ENCODE measurements at regions of chr19 and their contacts with region 1.

Region 1: GRCh38 chr19:58451358-58452101 is at the start of gene ZNF324B:
- DNase-seq: peak; percentile 97
- H3K4me3 Mint-ChIP-seq: peak within 1 kb of the TSS; percentile 79
- H3K27ac Mint-ChIP-seq: no peak within 1 kb of the TSS
- H3K4me1 Mint-ChIP-seq: peaks cover 21% of the 10 kb centered on the region
- H3K27me3 Mint-ChIP-seq: peaks cover 11% of the 10 kb centered on the region
- total RNA-seq, gene ZNF324B: 5.8 to 6.2 TPM

Region 2: GRCh38 chr19:58429745-58430144 is 21.8 kb before region 1 on chr19:
- CTCF ChIA-PET with region 1: no interaction called
- intact Hi-C with region 1: no loop called
- DNase-seq: no peak
- H3K4me3 Mint-ChIP-seq: no peak overlapping the region
- H3K27ac Mint-ChIP-seq: no peak overlapping the region
- H3K4me1 Mint-ChIP-seq: no peaks in the 10 kb centered on the region
- H3K27me3 Mint-ChIP-seq: no peaks in the 10 kb centered on the region

Region 3: DNA sequence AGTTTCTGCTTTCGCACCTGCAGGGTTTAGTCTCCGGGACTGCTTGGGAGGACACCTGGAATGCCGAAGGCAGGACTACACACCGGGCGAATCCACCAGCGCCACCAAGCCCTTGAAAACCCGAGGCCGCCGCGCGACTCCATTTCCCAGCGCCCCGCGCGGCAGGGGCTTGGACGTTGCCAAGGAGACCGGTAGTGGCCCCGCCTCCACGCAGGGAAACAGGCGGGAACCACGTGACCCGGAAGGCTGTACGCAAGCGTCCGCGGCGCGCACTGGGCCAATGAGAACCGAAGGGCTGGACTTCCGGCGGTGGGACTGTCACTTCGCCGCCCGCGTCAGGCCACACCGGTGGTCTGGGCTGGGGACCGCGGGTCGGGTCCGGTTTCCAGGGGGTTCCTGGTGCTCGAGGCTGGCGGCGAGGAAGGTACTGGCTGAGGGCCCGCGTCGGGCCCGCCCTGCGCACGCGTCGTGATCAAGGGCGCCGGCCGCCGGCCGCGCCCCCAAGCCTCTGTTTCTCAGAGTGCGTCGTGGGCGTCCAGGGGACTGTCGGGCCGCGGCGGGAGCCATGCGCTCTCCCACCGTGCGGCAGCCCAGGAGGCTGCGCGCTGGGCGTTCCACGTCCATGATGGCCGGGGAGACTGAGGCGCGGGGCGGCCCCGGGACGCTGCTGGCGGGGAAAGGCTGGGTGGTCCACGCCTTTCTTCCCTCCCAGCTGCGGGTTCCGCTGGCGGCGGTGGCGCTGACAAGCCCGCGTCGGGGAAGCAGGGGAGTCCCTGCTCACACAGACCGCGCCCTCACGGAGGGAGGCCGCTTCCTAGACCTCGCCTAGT is 15.4 kb after region 1 on chr19 and contains the start of gene ZNF324:
- CTCF ChIA-PET with region 1: interaction called, 4 read pairs
- intact Hi-C with region 1: loop called (anchors 1 kb)
- DNase-seq: peak; percentile 99
- H3K4me3 Mint-ChIP-seq: peak within 1 kb of the TSS; percentile 83
- H3K27ac Mint-ChIP-seq: no peak within 1 kb of the TSS
- H3K4me1 Mint-ChIP-seq: peaks cover 20% of the 10 kb centered on the region
- H3K27me3 Mint-ChIP-seq: peaks cover 2% of the 10 kb centered on the region
- total RNA-seq, gene ZNF324: 2.4 to 3.0 TPM

Region 4: GRCh38 chr19:58475714-58476497 is 24.4 kb after region 1 on chr19 and contains the start of gene ZNF446:
- CTCF ChIA-PET with region 1: no interaction called
- intact Hi-C with region 1: loop called (anchors 1 kb)
- DNase-seq: peak; percentile 97
- H3K4me3 Mint-ChIP-seq: peak within 1 kb of the TSS; percentile 94
- H3K27ac Mint-ChIP-seq: peak within 1 kb of the TSS; percentile 97
- H3K4me1 Mint-ChIP-seq: peaks cover 13% of the 10 kb centered on the region
- H3K27me3 Mint-ChIP-seq: no peaks in the 10 kb centered on the region
- total RNA-seq, gene ZNF446: 2.6 to 2.9 TPM

Region 5: DNA sequence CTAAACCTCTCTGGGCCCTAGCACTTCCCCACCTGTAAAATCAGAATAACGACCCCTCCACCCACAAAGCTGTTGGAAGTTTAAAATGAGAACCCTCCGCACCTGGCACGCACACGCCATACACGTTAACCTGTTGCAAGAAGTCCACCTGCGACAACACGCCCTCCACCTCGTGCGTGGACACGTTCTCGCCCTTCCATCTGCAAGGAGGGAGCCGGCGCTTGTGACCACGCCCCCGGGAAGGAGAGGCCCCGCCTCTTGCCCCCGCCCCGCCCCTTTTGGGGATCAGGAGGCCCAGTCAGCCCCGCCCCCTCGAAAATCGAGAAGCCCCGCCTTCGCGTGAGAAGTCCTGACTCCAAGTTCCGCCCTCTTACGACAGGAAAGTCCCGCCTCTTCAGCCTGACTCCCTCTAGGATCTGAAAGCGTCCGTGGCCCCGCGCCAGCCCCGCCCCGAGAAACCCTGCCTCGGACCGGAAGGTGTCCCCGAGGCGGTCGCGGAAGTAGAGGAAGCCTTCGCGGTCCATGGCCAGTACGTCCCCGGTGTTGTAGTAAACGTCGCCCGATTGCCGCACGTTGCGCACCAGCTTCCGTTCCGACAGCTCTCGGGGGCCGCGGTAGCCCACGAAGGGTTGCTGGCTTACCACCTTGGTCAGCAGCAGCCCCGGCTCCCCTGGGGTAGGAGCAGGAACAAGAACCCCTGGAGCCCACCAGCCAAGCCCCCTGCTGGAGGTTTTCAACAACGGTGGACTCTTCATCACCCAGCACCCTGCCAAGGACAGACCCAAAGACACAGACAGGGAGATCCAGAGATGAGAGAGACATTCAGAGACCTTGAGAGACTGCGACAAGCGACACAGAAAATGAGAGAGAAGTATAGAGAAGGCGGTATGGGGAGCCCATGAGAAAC is 47.7 kb after region 1 on chr19:
- CTCF ChIA-PET with region 1: no interaction called
- intact Hi-C with region 1: no loop called
- DNase-seq: peak; percentile 100
- H3K4me3 Mint-ChIP-seq: peak overlapping the region; percentile 92
- H3K27ac Mint-ChIP-seq: peak overlapping the region; percentile 81
- H3K4me1 Mint-ChIP-seq: peaks cover 23% of the 10 kb centered on the region
- H3K27me3 Mint-ChIP-seq: no peaks in the 10 kb centered on the region